Natural killer cell (primary cell): ENCODE measurements at regions of chr20 and their contacts with region 1.

Region 1: DNA sequence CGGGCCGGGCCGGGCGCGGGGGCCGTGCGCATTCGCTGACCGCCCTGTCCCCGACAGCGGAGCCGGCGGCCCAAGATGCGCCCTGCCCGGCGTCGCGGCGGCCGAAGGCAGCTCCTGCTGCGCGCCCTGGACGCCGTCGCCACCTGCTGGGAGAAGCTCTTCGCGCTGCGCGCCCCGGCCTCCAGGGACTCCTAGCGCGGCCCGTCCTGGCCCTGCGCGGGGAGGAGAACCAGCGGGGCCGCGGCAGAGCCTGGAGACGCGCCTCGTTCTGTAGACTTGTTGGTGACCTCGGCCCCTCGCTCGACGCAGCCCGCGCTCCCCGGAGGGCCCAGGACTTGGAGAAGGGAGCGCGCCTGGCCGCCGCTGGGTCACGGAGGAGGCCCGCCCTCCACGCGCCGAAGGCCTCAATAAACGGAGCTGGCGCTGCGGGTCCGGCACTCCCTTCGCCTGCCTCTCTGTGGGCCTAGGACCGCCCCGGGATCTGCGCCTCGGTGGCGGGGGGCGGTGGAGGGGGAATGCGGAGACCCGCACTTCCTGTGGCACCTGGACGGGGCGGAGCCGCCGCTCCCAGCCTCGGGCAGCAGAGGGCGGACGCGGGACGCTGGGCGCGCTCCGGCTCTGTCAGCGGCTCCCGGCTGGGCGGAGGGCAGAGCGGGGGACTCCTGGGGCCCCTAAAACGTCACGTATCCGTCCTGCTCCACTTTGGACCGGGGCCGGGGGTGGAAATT is 2.7 kb downstream of the C20orf204 start:
- DNase-seq: peak; percentile 66 to 86
- ATAC-seq: peak; percentile 81 to 89 (median 84)
- H3K4me3 ChIP-seq: peak overlapping the region; percentile 48
- H3K4me3 Mint-ChIP-seq: peak overlapping the region; percentile 79
- H3K27ac ChIP-seq: no peak overlapping the region
- H3K27ac Mint-ChIP-seq: no peak overlapping the region
- H3K4me1 ChIP-seq: peaks cover 73% of the 10 kb centered on the region
- H3K4me1 Mint-ChIP-seq: peaks cover 5 to 15% of the 10 kb centered on the region in 2 donors
- H3K27me3 ChIP-seq: peaks cover 36% of the 10 kb centered on the region
- H3K27me3 Mint-ChIP-seq: peaks cover 7 to 17% of the 10 kb centered on the region in 2 donors
- CTCF ChIP-seq: peak; percentile 71

Region 2: DNA sequence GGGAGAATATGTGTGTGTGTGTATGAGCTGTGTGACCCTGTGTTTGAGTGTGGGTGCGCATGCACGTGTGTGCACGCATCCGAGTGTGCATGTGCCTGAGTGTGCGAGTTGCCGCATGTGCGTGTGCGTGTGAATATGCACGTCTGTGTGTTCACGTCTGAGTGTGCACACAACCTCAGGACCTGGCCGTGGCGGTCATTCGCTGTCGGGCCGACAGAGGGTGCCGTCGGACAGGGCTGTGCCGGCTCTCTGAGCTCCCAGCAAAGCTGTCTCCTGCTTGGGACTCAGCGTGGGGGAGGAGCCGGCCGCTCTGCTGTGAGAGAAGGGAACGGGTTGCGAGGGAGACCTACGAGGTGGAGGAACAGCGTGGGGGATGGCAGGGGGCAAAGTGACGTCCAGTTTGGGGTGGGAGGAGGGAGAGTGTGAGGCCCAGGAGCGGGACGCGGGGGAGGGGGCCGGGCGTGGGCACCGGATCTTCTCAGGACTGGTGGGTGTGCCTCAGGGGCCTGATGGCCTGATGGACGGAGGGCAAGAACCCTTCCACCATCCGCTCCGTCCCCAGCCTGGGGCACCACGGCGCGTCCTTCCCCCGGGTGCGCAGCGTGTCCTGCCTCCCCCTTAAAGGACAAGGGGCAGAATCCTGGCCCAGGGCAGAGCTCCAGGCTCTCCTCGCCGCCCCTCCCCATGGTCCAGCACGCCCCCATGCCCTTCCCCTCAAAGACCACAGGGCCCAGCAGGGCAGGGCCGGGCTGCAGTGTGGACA is 1066.3 kb before region 1 on chr20:
- intact Hi-C with region 1: no loop called
- DNase-seq: peak; percentile 81 to 90
- ATAC-seq: peak; percentile 88 to 99 (median 98)
- H3K4me3 ChIP-seq: no peak overlapping the region
- H3K4me3 Mint-ChIP-seq: peak overlapping the region; percentile 56
- H3K27ac ChIP-seq: no peak overlapping the region
- H3K27ac Mint-ChIP-seq: peak overlapping the region in 1 of 2 donors; percentile 17
- H3K4me1 ChIP-seq: peaks cover 21% of the 10 kb centered on the region
- H3K4me1 Mint-ChIP-seq: peaks cover 10 to 20% of the 10 kb centered on the region in 2 donors
- H3K27me3 ChIP-seq: peaks cover 45% of the 10 kb centered on the region
- H3K27me3 Mint-ChIP-seq: peaks cover 24 to 38% of the 10 kb centered on the region in 2 donors
- CTCF ChIP-seq: peak; percentile 83

Region 3: DNA sequence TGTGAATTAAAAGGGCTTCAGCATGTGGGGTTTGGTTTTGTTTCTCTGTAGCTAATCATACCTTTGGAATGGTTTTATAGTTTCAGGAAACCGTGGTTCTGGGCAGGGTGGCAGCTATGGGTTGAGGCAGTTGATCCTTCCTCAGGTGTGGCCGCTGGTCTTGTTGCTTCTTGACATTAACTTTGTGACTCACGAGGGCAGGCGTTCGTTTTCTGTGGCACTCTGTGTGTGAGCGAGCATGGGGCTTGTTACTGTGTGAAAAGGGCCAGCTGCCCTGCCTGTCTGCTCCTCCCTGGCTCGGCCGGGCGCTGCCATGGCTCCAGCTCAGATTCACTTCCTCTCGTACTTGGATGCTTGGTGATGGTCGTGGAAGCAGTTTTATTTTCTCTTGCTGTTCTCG is 127.6 kb before region 1 on chr20:
- intact Hi-C with region 1: loop called (anchors 5 kb)
- DNase-seq: no peak
- ATAC-seq: no peak
- H3K4me3 ChIP-seq: no peak overlapping the region
- H3K4me3 Mint-ChIP-seq: no peak overlapping the region
- H3K27ac ChIP-seq: no peak overlapping the region
- H3K27ac Mint-ChIP-seq: peak overlapping the region; percentile 68 to 74
- H3K4me1 ChIP-seq: peaks cover 19% of the 10 kb centered on the region
- H3K4me1 Mint-ChIP-seq: peaks cover 39 to 42% of the 10 kb centered on the region in 2 donors
- H3K27me3 ChIP-seq: no peaks in the 10 kb centered on the region
- H3K27me3 Mint-ChIP-seq: no peaks in the 10 kb centered on the region
- CTCF ChIP-seq: no peak

Region 4: DNA sequence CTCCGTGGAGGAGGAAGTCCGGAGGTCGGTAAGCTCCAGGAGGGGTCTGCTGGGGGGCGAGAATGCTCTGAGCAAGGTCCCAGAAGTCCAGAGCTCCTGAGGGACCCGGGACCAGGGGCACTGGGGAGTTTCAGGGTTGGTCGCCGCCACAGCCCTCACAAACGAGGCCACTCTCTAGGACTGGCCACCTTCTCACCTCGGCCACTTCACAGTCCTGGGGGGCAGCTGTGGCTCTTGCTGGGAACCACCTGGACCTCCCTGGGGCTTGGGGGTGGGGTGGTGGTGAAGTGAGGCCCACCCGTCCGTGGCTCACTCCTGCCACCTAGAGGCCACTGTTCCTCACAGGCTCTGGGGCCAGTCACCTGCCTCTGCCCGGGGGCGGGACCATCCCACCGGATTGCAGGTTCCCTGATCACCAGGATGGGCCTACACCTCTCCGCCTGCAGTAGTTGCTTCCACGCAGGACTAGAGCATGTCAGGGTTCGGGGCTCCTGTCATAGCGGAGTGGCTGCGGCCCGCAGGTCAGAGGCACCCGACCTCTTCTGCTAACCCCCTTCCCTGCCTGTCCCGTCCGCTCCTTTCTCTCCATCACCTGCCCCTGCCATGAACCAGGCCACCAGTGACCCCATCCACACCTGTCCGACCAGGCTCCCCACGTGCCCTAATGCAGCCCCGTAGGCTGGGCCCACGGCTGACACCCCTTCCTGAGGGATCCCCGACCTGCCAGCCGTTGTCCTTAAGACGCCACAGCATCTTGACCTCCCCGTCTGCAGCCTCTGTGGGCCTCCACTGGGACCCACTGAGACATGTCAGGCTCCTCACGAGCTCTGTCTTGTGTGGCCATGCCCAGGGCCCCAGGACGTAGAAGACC is 19.1 kb after region 1 on chr20:
- intact Hi-C with region 1: loop called (anchors 1 kb)
- DNase-seq: peak; percentile 75 to 87
- ATAC-seq: peak; percentile 83 to 88 (median 83)
- H3K4me3 ChIP-seq: no peak overlapping the region
- H3K4me3 Mint-ChIP-seq: peak overlapping the region; percentile 58
- H3K27ac ChIP-seq: no peak overlapping the region
- H3K27ac Mint-ChIP-seq: peak overlapping the region in 1 of 2 donors; percentile 65
- H3K4me1 ChIP-seq: peaks cover 25% of the 10 kb centered on the region
- H3K4me1 Mint-ChIP-seq: peaks cover 9 to 25% of the 10 kb centered on the region in 2 donors
- H3K27me3 ChIP-seq: peaks cover 3% of the 10 kb centered on the region
- H3K27me3 Mint-ChIP-seq: peaks cover 0 to 16% of the 10 kb centered on the region in 2 donors
- CTCF ChIP-seq: peak; percentile 83